ENCODE measurements at regions of chr11 and their contacts with region 1.

Region 1: GRCh38 chr11:67353317-67354074 is at the start of gene POLD4:
- DNase-seq: peak; percentile 98
- ATAC-seq: peak; percentile 90
- H3K4me3 Mint-ChIP-seq: peak within 1 kb of the TSS; percentile 83
- H3K27ac Mint-ChIP-seq: peak within 1 kb of the TSS; percentile 98
- H3K4me1 Mint-ChIP-seq: peaks cover 38% of the 10 kb centered on the region
- H3K27me3 Mint-ChIP-seq: peaks cover 3% of the 10 kb centered on the region
- CTCF ChIP-seq: no peak
- total RNA-seq, gene POLD4: 34.1 to 36.1 TPM

Region 2: DNA sequence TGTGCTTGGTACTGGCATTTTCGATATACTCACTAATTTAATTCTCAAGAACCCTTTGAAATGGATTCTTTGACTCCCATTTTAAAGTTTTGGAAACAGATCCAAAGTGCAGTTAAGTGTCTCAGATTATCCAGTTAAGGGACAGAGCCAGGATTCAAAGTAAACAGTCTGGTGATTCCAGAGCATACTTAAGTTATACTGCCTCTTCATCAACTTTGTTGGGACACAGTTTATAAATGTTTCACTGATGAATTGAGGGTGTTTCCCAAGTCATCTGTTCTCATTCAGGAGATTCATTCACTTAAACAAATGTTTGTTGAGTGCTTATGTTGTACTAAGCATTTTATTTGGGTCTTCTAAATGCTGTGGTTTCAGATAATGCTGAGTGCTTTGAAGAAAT is 217.3 kb before region 1 on chr11:
- CTCF ChIA-PET with region 1: no interaction called
- POLR2A ChIA-PET with region 1: no interaction called
- intact Hi-C with region 1: no loop called
- DNase-seq: no peak
- ATAC-seq: no peak
- H3K4me3 Mint-ChIP-seq: no peak overlapping the region
- H3K27ac Mint-ChIP-seq: no peak overlapping the region
- H3K4me1 Mint-ChIP-seq: peaks cover 20% of the 10 kb centered on the region
- H3K27me3 Mint-ChIP-seq: no peaks in the 10 kb centered on the region
- CTCF ChIP-seq: no peak

Region 3: GRCh38 chr11:67317205-67317887 is 36.1 kb before region 1 on chr11:
- CTCF ChIA-PET with region 1: interaction called, 42 read pairs
- POLR2A ChIA-PET with region 1: no interaction called
- intact Hi-C with region 1: no loop called
- DNase-seq: peak; percentile 98
- ATAC-seq: peak; percentile 91
- H3K4me3 Mint-ChIP-seq: peak overlapping the region; percentile 94
- H3K27ac Mint-ChIP-seq: peak overlapping the region; percentile 97
- H3K4me1 Mint-ChIP-seq: peaks cover 16% of the 10 kb centered on the region
- H3K27me3 Mint-ChIP-seq: no peaks in the 10 kb centered on the region
- CTCF ChIP-seq: peak; percentile 82

Region 4: GRCh38 chr11:67337257-67337656 is 16.2 kb before region 1 on chr11:
- CTCF ChIA-PET with region 1: interaction called, 40 read pairs
- POLR2A ChIA-PET with region 1: interaction called, 5 read pairs
- intact Hi-C with region 1: no loop called
- DNase-seq: no peak
- ATAC-seq: no peak
- H3K4me3 Mint-ChIP-seq: no peak overlapping the region
- H3K27ac Mint-ChIP-seq: no peak overlapping the region
- H3K4me1 Mint-ChIP-seq: no peaks in the 10 kb centered on the region
- H3K27me3 Mint-ChIP-seq: no peaks in the 10 kb centered on the region
- CTCF ChIP-seq: no peak

Region 5: DNA sequence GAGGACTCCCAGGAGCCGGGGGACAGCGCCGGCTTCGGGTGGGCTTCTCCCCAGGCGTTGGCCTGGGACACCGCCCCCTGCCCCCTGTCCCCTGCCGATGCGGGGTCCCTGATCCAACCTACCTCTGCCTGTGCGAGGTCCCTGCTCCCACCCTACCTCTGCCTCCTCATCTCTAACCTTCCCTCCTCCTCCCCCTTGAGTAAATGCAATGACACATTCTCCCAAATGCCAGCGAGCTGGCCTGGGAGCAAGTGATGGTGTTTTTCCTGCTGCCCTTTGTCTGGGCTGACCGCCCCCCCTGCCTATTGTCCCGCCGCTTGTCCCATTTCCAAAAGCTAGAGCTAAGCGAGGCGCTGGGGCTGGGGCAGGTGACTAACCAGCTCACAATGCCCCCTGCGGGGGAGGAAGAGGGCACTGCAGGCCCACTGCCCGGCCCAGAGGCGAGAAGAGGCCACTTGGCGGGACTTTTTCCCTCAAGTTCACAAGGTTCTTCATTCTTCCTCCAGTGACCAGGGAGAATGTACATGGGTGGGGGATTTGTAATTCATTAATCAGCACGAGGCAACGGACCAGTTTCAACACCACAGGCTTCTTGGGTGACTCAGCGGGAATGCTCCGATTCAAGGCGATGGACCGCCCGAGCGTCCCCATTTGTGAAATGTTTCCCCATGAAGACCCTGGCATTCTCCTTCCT is 20.6 kb after region 1 on chr11:
- CTCF ChIA-PET with region 1: interaction called, 883 read pairs
- POLR2A ChIA-PET with region 1: interaction called, 14 read pairs
- intact Hi-C with region 1: no loop called
- DNase-seq: peak; percentile 65
- ATAC-seq: peak; percentile 43
- H3K4me3 Mint-ChIP-seq: peak overlapping the region; percentile 78
- H3K27ac Mint-ChIP-seq: no peak overlapping the region
- H3K4me1 Mint-ChIP-seq: peaks cover 43% of the 10 kb centered on the region
- H3K27me3 Mint-ChIP-seq: peaks cover 27% of the 10 kb centered on the region
- CTCF ChIP-seq: peak; percentile 31

Region 6: DNA sequence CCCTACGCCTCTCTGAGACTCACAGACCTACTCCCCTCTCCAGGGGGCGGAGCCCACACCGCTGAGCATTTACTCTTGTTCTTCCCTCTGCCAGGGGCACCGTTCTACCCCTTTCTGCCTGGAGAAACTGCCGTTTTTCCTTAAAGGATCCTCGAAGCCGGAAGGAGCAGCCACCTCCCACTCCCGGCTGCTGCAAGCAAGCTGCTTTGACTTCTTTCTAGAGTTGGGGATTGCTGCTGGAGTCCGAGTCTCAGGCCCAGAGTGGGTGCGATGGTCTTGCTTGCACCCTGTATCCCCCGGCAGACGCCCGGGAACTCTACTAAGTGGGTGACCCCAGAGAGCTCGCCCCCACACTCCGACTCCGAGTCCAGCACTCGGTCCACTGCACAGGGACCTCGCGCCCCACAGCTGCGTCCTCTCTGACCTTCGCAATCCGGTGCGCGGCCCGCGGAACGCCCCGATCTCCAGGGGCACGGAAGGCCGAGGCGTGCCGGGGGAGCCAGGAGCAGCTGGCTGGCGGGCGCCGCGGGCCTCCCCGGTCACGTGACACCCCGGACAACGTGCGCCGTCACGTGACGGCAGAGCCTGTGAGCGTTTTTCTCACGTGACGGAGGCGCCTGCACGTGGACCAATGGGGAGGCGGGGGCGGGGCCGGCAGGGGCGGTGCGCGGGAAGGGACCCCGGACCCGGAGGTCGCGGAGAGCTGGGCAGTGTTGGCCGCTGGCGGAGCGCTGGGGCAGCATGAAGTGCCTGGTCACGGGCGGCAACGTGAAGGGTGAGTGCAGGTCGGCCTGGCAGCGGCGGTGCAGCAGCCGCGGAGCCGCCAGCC is 38.0 kb after region 1 on chr11 and contains the start of gene RAD9A:
- CTCF ChIA-PET with region 1: interaction called, 883 read pairs
- POLR2A ChIA-PET with region 1: interaction called, 22 read pairs
- intact Hi-C with region 1: no loop called
- DNase-seq: peak; percentile 96
- ATAC-seq: peak; percentile 77
- H3K4me3 Mint-ChIP-seq: peak within 1 kb of the TSS; percentile 92
- H3K27ac Mint-ChIP-seq: peak within 1 kb of the TSS; percentile 77
- H3K4me1 Mint-ChIP-seq: peaks cover 30% of the 10 kb centered on the region
- H3K27me3 Mint-ChIP-seq: no peaks in the 10 kb centered on the region
- CTCF ChIP-seq: no peak
- total RNA-seq, gene RAD9A: 29.7 to 30.6 TPM

Measured in activated CD8-positive, alpha-beta T cell treated with anti-CD3 and anti-CD28 coated beads for 36 hours (primary cell).